WTC11 (cell line): ENCODE measurements at regions of chr9 and their contacts with region 1.

Region 1: DNA sequence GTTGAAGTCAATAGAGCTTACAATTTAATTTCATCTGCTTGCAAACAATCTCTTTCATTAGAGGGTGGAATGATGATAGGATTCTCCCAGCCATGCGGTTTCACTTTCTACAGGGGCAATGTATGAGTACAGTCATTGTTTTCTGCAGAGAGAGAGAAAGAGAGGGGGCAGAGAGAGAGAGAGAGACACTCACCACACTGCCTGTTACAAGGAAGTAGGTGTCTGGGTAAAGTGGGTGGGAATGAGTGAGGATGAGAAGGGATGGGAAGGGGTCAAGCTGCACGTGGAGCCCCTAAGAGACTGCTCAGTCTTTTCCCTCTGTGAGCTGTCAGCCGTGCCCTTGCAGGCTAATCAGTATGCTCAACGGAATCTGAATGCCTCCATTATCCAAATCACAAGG is 454.3 kb downstream of the KDM4C start:
- DNase-seq: no peak
- ATAC-seq: no peak
- H3K4me3 Mint-ChIP-seq: no peak overlapping the region
- H3K27ac Mint-ChIP-seq: no peak overlapping the region
- H3K4me1 Mint-ChIP-seq: peaks cover 40% of the 10 kb centered on the region
- H3K27me3 Mint-ChIP-seq: peaks cover 52% of the 10 kb centered on the region
- CTCF ChIP-seq: no peak

Region 2: GRCh38 chr9:7186175-7186574 is 25.9 kb before region 1 on chr9:
- CTCF ChIA-PET with region 1: interaction called, 12 read pairs
- POLR2A ChIA-PET with region 1: no interaction called
- DNase-seq: peak; percentile 46
- ATAC-seq: peak; percentile 80
- H3K4me3 Mint-ChIP-seq: no peak overlapping the region
- H3K27ac Mint-ChIP-seq: no peak overlapping the region
- H3K4me1 Mint-ChIP-seq: peaks cover 11% of the 10 kb centered on the region
- H3K27me3 Mint-ChIP-seq: peaks cover 4% of the 10 kb centered on the region; the same call in 1 of the 2 replicates
- CTCF ChIP-seq: peak; percentile 82

Region 3: GRCh38 chr9:7342229-7342628 is 130.1 kb after region 1 on chr9:
- CTCF ChIA-PET with region 1: no interaction called
- POLR2A ChIA-PET with region 1: no interaction called
- DNase-seq: no peak
- ATAC-seq: no peak
- H3K4me3 Mint-ChIP-seq: no peak overlapping the region
- H3K27ac Mint-ChIP-seq: no peak overlapping the region
- H3K4me1 Mint-ChIP-seq: peaks cover 6% of the 10 kb centered on the region; the same call in 1 of the 2 replicates
- H3K27me3 Mint-ChIP-seq: no peaks in the 10 kb centered on the region
- CTCF ChIP-seq: no peak